ENCODE measurements at regions of chrX and their contacts with region 1.

Region 1: DNA sequence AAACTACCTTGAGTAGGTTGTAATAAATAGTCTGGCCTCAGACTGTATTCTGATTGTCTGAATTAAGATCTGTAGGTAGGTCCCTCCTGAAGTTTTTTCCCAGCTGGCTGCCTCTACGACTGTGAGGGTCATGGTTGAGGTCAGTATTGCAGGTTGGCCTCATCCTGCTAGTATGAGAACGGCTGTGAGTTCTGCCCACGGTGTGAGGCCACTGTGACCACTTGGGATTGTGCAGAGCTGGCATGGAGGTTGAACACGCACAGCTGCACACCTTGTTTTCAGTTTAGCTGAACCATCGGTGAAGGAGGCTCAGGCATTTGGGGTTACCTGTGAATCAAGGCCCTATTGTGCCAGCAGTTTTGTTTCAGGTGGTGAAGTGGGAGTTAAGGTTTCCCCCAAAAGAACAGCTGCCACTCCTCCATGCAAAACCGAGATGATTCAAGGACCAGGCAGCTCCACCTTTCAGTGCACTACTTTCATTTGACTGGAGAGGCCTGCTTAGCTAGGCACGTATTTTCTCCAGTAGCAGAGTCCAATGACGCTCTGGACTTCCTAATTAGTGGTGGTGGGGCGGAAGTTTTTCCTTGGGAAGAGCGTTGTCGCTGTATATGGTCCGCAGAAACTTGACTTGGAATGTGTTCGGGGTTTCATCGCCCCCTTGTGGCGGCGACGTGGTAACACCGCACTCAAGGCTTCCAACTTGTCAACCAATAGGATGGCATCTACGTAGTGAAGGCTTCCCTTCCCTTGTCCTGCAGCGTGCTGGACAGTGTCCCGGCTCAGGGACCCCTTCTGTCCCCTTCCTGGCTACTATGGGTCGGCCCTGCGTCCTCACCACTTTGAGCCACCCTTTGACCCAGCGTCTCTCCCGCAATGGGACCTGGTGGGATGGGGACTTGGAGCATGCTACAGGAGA is 13.8 kb downstream of the CMC4 start:
- DNase-seq: peak; percentile 26
- ATAC-seq: peak; percentile 84
- H3K4me3 Mint-ChIP-seq: peak overlapping the region; percentile 48
- H3K27ac Mint-ChIP-seq: peak overlapping the region; percentile 35
- H3K4me1 Mint-ChIP-seq: peaks cover 13% of the 10 kb centered on the region
- H3K27me3 Mint-ChIP-seq: no peaks in the 10 kb centered on the region
- CTCF ChIP-seq: no peak

Region 2: DNA sequence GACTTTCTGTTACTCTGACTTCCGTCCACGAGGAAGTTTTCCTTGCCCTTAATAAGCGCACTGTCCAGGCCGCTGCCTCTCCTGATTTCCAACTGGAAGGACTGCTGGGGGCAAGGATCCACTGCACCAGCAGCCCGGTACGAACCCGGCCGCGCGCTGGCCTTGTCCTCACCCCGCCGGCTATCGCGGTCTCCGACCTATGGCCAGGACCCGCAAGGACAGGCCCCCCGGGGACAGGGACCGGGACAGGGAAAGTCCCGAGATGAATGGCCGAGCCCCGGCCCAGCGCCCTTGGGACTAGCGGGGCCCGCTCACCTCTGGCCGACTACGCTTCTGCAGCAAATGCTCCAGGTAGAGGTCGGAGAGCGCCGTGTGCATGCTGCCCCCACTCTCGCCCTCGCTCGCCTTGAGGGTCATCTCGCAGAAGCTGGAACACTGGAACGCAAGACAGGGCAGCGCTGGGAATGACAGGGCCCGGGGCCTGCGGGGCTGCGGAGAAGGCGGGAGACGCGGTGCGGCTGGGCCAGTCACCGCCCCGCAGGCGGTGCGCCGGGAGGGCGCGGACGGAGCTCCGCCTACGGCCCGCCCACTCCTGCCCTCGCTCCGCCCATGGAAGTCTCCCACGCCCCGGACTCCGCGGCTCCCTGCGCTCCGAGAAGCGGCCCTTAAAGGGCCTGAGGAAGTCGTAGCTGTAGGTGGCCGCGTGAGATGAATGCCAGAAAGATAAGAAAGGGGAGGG is 252.0 kb before region 1 on chrX and contains the start of gene MPP1:
- CTCF ChIA-PET with region 1: no interaction called
- POLR2A ChIA-PET with region 1: no interaction called
- intact Hi-C with region 1: no loop called
- DNase-seq: peak; percentile 74
- ATAC-seq: peak; percentile 99
- H3K4me3 Mint-ChIP-seq: peak within 1 kb of the TSS; percentile 86
- H3K27ac Mint-ChIP-seq: peak within 1 kb of the TSS; percentile 66
- H3K4me1 Mint-ChIP-seq: peaks cover 12% of the 10 kb centered on the region
- H3K27me3 Mint-ChIP-seq: no peaks in the 10 kb centered on the region
- CTCF ChIP-seq: no peak
- total RNA-seq, gene MPP1: 5.8 and 7.2 TPM in 2 replicates

Region 3: GRCh38 chrX:155070975-155071693 is 14.0 kb after region 1 on chrX and contains the starts of genes BRCC3, CMC4 and MTCP1:
- CTCF ChIA-PET with region 1: no interaction called
- POLR2A ChIA-PET with region 1: no interaction called
- intact Hi-C with region 1: loop called (anchors 1 kb)
- DNase-seq: peak; percentile 74
- ATAC-seq: peak; percentile 83
- H3K4me3 Mint-ChIP-seq: peak within 1 kb of the TSS; percentile 90
- H3K27ac Mint-ChIP-seq: peak within 1 kb of the TSS; percentile 92
- H3K4me1 Mint-ChIP-seq: peaks cover 45% of the 10 kb centered on the region
- H3K27me3 Mint-ChIP-seq: no peaks in the 10 kb centered on the region
- CTCF ChIP-seq: no peak
- total RNA-seq, gene BRCC3: 20.1 and 21.1 TPM in 2 replicates
- total RNA-seq, gene CMC4: 4.7 and 5.3 TPM in 2 replicates
- total RNA-seq, gene MTCP1: 19.5 and 21.2 TPM in 2 replicates

Region 4: DNA sequence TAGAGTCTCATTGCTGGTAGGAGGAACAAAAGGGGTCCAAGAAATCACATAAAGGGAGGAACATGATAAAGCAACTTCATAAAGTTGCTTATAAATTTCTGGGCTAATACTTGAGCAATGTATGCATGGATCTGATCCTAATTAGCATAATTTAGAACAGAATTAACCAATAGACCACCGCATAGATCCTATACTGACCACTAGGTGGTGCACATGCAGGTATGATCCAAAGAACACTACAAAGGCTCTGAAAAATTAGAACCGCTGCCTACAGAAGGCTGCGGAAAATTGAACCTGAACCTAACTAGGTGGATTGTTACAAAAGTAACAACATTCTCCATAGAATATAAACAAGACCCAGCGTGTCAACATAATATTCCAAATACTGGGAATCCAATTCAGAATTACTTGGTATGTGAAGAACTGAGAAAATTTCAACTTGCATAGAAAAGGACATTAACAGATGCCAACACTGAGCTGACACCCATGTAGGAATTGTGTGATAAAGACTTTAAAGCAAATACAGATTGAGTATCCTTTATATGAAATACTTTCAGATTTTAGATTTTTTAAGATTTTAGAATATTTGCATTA is 37.4 kb after region 1 on chrX:
- CTCF ChIA-PET with region 1: no interaction called
- POLR2A ChIA-PET with region 1: no interaction called
- intact Hi-C with region 1: no loop called
- DNase-seq: no peak
- ATAC-seq: peak; percentile 56
- H3K4me3 Mint-ChIP-seq: no peak overlapping the region
- H3K27ac Mint-ChIP-seq: no peak overlapping the region
- H3K4me1 Mint-ChIP-seq: no peaks in the 10 kb centered on the region
- H3K27me3 Mint-ChIP-seq: no peaks in the 10 kb centered on the region
- CTCF ChIP-seq: no peak